ENCODE measurements at regions of chr12 and their contacts with region 1.

Region 1: DNA sequence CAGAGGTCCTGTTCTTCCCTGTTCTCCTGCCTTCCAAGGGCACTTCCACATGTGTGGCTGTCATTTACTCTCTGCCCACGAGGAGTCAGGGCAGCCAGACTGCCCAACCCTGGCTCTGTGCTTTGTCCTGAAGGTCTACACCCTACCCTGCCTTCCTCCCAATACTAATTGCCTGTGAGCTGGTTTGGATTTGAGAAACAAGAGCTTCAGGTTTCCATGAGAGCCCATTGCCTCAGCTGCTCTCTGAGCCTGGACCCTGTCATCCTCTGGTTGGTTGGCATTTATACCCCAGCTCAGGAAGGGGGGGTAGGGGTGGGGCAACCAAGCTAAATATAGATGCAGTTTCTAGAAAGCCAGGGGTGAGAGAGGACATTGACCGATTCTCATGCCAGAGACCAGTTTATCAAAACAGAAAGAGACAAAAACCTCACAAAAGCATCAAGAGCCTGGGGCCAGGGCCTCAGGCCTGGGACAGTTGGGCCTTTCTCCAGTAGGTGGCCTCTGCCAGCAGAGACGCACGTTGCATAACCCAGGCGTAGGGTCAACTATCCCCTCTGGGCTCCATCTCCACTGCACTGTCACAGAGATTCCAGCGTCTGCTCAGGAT is 34.5 kb downstream of the VDR start:
- DNase-seq: peak; percentile 43
- ATAC-seq: peak; percentile 76
- H3K4me3 ChIP-seq: no peak overlapping the region
- H3K27ac ChIP-seq: 0 out of 2 replicates have a peak overlapping the region, but pooled peaks have one; percentile 4
- H3K4me1 ChIP-seq: peaks cover 31% of the 10 kb centered on the region
- H3K27me3 ChIP-seq: no peaks in the 10 kb centered on the region
- CTCF ChIP-seq: peak; percentile 22 to 62 (median 53); a peak in 5 of 6 replicates
- EP300 ChIP-seq: no peak
- POLR2A ChIP-seq: no peak
- RAD21 ChIP-seq: peak; percentile 51

Region 2: GRCh38 chr12:47527816-47528215 is 342.5 kb before region 1 on chr12:
- CTCF ChIA-PET with region 1: no interaction called
- POLR2A ChIA-PET with region 1: no interaction called
- RAD21 ChIA-PET with region 1: no interaction called
- SMC1A ChIA-PET with region 1: no interaction called
- in situ Hi-C with region 1: no loop called
- intact Hi-C with region 1: no loop called
- DNase-seq: no peak
- ATAC-seq: no peak
- H3K4me3 ChIP-seq: no peak overlapping the region
- H3K27ac ChIP-seq: no peak overlapping the region
- H3K4me1 ChIP-seq: no peaks in the 10 kb centered on the region
- H3K27me3 ChIP-seq: no peaks in the 10 kb centered on the region; a peak in 1 of 4 replicates
- CTCF ChIP-seq: no peak
- EP300 ChIP-seq: no peak
- POLR2A ChIP-seq: no peak
- RAD21 ChIP-seq: no peak

Region 3: GRCh38 chr12:47889040-47889439 is 18.8 kb after region 1 on chr12:
- CTCF ChIA-PET with region 1: interaction called, 94 read pairs
- POLR2A ChIA-PET with region 1: interaction called, 22 read pairs
- RAD21 ChIA-PET with region 1: interaction called, 44 read pairs
- SMC1A ChIA-PET with region 1: interaction called, 118 read pairs
- in situ Hi-C with region 1: no loop called
- intact Hi-C with region 1: no loop called
- DNase-seq: no peak
- ATAC-seq: peak; percentile 57
- H3K4me3 ChIP-seq: no peak overlapping the region
- H3K27ac ChIP-seq: no peak overlapping the region; the same call in 1 of the 2 replicates
- H3K4me1 ChIP-seq: peaks cover 38% of the 10 kb centered on the region
- H3K27me3 ChIP-seq: no peaks in the 10 kb centered on the region
- CTCF ChIP-seq: no peak
- EP300 ChIP-seq: no peak
- POLR2A ChIP-seq: peak; percentile 59
- RAD21 ChIP-seq: no peak

Region 4: DNA sequence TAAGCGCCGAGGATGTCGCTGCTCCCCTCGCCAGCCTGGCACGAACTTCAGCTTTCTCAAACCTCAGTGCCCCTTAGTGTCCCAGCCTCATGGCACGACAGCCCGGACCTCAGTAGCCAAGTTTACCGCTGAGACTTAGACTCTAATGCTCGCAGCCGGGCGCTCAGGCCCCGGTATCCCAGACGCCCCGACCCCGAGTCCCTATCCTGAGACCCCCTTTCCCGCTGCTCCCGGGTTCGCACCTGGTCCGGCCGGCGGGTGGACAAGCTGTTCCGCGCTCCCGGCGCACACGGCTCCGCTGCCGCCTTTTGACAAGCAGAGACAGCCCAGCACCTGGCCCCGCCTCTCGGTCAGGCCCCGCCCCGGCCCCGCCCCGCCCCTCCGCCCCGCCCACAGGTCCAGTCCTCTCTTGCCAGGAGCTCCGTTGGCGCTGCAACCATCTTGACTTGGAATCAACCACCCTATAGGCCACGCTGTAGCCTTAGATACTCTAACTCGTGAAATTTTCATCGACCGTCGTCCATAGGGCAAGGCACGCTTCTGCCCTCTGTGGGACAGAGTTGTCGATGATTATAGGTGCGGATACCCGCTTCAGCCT is 34.5 kb after region 1 on chr12 and contains the start of gene VDR:
- CTCF ChIA-PET with region 1: interaction called, 11 read pairs
- POLR2A ChIA-PET with region 1: interaction called, 5 read pairs
- RAD21 ChIA-PET with region 1: interaction called, 10 read pairs
- SMC1A ChIA-PET with region 1: interaction called, 15 read pairs
- in situ Hi-C with region 1: no loop called
- intact Hi-C with region 1: no loop called
- DNase-seq: no peak
- ATAC-seq: peak; percentile 85
- H3K4me3 ChIP-seq: peak within 1 kb of the TSS; percentile 84
- H3K27ac ChIP-seq: no peak within 1 kb of the TSS
- H3K4me1 ChIP-seq: peaks cover 30% of the 10 kb centered on the region
- H3K27me3 ChIP-seq: peaks cover 4 to 5% of the 10 kb centered on the region in 2 experiments; a peak in 1 of 4 replicates
- CTCF ChIP-seq: peak in 2 of 3 experiments; percentile 4 to 34; a peak in 2 of 6 replicates
- EP300 ChIP-seq: no peak
- POLR2A ChIP-seq: peak; percentile 69
- RAD21 ChIP-seq: no peak
- polyA plus RNA-seq, gene VDR: 0.27 to 0.75 TPM

Region 5: DNA sequence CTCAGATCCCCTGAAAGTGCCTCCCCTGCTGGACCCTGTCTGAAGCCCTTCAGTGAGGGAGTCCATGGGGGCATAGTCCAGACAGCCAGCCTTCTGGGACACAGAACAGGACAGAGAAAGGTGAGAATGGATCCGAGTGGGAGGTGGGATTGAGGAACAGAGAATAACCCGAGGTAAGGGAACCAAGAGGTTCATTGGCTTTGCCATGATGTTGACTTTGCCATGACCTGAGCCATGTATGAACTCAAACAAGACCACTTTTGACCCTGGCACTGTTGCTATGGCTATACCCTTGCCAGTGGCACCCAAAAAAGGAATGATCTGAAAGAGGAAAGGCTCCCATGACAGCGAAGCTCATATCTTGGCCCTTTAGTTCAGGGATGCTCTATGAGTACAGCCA is 57.1 kb after region 1 on chr12:
- CTCF ChIA-PET with region 1: no interaction called
- POLR2A ChIA-PET with region 1: no interaction called
- RAD21 ChIA-PET with region 1: no interaction called
- SMC1A ChIA-PET with region 1: no interaction called
- in situ Hi-C with region 1: no loop called
- intact Hi-C with region 1: no loop called
- DNase-seq: no peak
- ATAC-seq: no peak
- H3K4me3 ChIP-seq: no peak overlapping the region
- H3K27ac ChIP-seq: no peak overlapping the region
- H3K4me1 ChIP-seq: no peaks in the 10 kb centered on the region
- H3K27me3 ChIP-seq: peaks cover 7 to 14% of the 10 kb centered on the region in 2 experiments
- CTCF ChIP-seq: no peak
- EP300 ChIP-seq: no peak
- POLR2A ChIP-seq: no peak
- RAD21 ChIP-seq: no peak

Region 6: GRCh38 chr12:48202766-48203165 is 332.5 kb after region 1 on chr12:
- CTCF ChIA-PET with region 1: no interaction called
- POLR2A ChIA-PET with region 1: no interaction called
- RAD21 ChIA-PET with region 1: no interaction called
- SMC1A ChIA-PET with region 1: no interaction called
- in situ Hi-C with region 1: no loop called
- intact Hi-C with region 1: no loop called
- DNase-seq: no peak
- ATAC-seq: no peak
- H3K4me3 ChIP-seq: no peak overlapping the region
- H3K27ac ChIP-seq: no peak overlapping the region
- H3K4me1 ChIP-seq: 0 out of 2 replicates have a peak, but pooled peaks cover 2% of the 10 kb centered on the region
- H3K27me3 ChIP-seq: no peaks in the 10 kb centered on the region
- CTCF ChIP-seq: no peak
- EP300 ChIP-seq: no peak
- POLR2A ChIP-seq: no peak
- RAD21 ChIP-seq: no peak